Activated CD8-positive, alpha-beta T cell treated with anti-CD3 and anti-CD28 coated beads for 36 hours (primary cell): ENCODE measurements at regions of chr16 and their contacts with region 1.

Region 1: GRCh38 chr16:74309789-74310781 is 13.5 kb downstream of the PSMD7 start:
- DNase-seq: peak; percentile 34
- ATAC-seq: peak; percentile 45
- H3K4me3 Mint-ChIP-seq: no peak overlapping the region
- H3K27ac Mint-ChIP-seq: no peak overlapping the region
- H3K4me1 Mint-ChIP-seq: peaks cover 3% of the 10 kb centered on the region
- H3K27me3 Mint-ChIP-seq: no peaks in the 10 kb centered on the region
- CTCF ChIP-seq: peak; percentile 86

Region 2: GRCh38 chr16:73976644-73977043 is 333.4 kb before region 1 on chr16:
- CTCF ChIA-PET with region 1: no interaction called
- POLR2A ChIA-PET with region 1: no interaction called
- intact Hi-C with region 1: no loop called
- DNase-seq: no peak
- ATAC-seq: no peak
- H3K4me3 Mint-ChIP-seq: no peak overlapping the region
- H3K27ac Mint-ChIP-seq: no peak overlapping the region
- H3K4me1 Mint-ChIP-seq: no peaks in the 10 kb centered on the region
- H3K27me3 Mint-ChIP-seq: no peaks in the 10 kb centered on the region
- CTCF ChIP-seq: no peak

Region 3: DNA sequence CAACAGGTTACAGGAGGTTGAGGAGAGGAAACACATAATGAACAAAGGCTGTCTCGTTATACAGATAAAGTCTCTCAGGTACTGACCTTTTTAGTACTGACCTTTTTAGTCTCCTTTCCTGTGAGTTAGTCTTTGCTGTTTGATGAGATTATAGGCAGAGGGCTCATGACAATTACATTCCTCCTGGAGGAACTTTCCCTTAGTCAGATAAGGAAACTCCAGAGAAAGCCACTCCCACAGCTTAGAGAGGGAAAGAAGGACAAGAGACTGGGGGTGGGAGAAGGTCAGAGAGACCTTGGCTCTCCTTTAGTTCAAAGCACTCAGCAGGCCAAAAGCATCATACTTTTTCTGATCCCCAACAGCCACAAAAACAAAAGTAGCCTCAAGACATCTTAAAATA is 28.8 kb before region 1 on chr16:
- CTCF ChIA-PET with region 1: no interaction called
- POLR2A ChIA-PET with region 1: no interaction called
- intact Hi-C with region 1: no loop called
- DNase-seq: no peak
- ATAC-seq: no peak
- H3K4me3 Mint-ChIP-seq: no peak overlapping the region
- H3K27ac Mint-ChIP-seq: no peak overlapping the region
- H3K4me1 Mint-ChIP-seq: no peaks in the 10 kb centered on the region
- H3K27me3 Mint-ChIP-seq: peaks cover 2% of the 10 kb centered on the region
- CTCF ChIP-seq: no peak

Region 4: DNA sequence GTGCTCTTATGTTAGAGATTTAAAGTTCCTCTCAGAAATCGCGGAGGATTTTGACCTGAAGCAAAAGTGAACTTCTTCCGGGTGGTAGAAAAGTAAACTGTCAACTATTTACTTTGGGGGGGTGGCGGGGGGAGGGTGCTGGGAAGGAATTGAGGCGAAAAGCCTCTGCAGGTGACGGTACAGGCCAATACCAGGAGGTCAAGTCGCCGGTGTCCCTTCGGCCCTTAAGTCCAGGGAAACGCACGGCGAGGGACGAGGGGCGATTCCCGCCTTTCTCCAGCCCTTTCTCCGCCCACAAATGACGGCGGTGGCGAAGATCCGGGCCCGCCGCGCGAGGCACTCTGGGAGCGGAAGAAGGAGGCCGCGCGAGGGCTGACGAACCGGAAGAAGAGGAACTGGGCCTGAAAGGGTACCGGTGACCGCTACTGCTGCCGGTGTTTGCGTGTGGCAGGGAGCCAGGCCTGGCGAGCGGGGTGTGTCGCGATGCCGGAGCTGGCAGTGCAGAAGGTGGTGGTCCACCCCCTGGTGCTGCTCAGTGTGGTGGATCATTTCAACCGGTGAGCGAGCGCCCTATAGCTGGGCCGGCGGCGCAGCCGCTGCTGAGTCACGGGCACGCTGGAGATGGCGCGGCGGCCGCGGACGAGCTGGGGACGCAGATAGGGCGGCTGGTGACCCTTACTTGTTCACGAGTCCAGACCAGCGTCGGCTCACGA is 13.5 kb before region 1 on chr16 and contains the start of gene PSMD7:
- CTCF ChIA-PET with region 1: interaction called, 21 read pairs
- POLR2A ChIA-PET with region 1: interaction called, 14 read pairs
- intact Hi-C with region 1: no loop called
- DNase-seq: peak; percentile 93
- ATAC-seq: peak; percentile 93
- H3K4me3 Mint-ChIP-seq: peak within 1 kb of the TSS; percentile 90
- H3K27ac Mint-ChIP-seq: peak within 1 kb of the TSS; percentile 94
- H3K4me1 Mint-ChIP-seq: peaks cover 33% of the 10 kb centered on the region
- H3K27me3 Mint-ChIP-seq: no peaks in the 10 kb centered on the region
- CTCF ChIP-seq: no peak
- total RNA-seq, gene PSMD7: 103 to 119 TPM

Region 5: GRCh38 chr16:74431516-74431915 is 121.4 kb after region 1 on chr16:
- CTCF ChIA-PET with region 1: no interaction called
- POLR2A ChIA-PET with region 1: no interaction called
- intact Hi-C with region 1: loop called (anchors 5 kb)
- DNase-seq: no peak
- ATAC-seq: no peak
- H3K4me3 Mint-ChIP-seq: no peak overlapping the region
- H3K27ac Mint-ChIP-seq: no peak overlapping the region
- H3K4me1 Mint-ChIP-seq: no peaks in the 10 kb centered on the region
- H3K27me3 Mint-ChIP-seq: no peaks in the 10 kb centered on the region
- CTCF ChIP-seq: no peak